IMR-90 (cell line): ENCODE measurements at regions of chr2 and their contacts with region 1.

Region 1: GRCh38 chr2:7927691-7928090 is 754.2 kb upstream of the ID2 start:
- DNase-seq: no peak
- ATAC-seq: no peak
- H3K4me3 ChIP-seq: no peak overlapping the region
- H3K27ac ChIP-seq: no peak overlapping the region
- H3K4me1 ChIP-seq: no peaks in the 10 kb centered on the region
- H3K27me3 ChIP-seq: no peaks in the 10 kb centered on the region
- CTCF ChIP-seq: no peak
- POLR2A ChIP-seq: no peak
- RAD21 ChIP-seq: no peak

Region 2: DNA sequence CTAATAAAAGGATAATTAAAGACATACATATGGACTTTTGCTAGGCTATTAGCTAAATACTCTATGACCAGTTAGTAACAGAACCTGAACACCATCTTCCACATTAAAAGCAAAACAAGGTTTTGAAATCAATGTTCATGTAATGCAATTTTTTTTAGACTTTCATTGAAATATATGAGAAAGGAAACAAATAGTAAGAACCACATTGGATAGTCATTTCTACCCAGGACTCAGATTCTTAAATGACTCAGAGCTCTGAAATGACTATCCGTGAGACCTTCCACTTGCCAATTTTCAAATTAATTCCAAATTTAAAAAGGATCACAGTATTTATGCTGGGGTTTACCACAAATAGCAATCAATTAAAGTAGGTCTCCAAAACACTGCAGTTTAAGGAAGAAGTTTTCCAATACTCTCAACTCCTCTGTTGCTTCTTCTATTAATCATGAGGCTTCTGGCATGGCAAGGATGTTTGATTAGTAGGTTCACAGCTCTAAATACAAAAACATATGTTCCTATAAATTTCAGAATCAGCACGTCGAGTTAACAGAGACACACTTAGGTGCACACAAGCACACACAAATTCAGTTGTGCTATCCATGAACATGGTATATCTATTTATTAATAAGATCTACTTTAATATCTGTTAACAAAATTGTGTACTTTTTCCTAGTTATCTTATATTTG is 169.5 kb before region 1 on chr2:
- CTCF ChIA-PET with region 1: no interaction called
- POLR2A ChIA-PET with region 1: no interaction called
- dilution Hi-C with region 1: no loop called
- in situ Hi-C with region 1: no loop called
- intact Hi-C with region 1: loop called (anchors 10 kb)
- DNase-seq: no peak
- ATAC-seq: no peak
- H3K4me3 ChIP-seq: no peak overlapping the region
- H3K27ac ChIP-seq: no peak overlapping the region
- H3K4me1 ChIP-seq: no peaks in the 10 kb centered on the region
- H3K27me3 ChIP-seq: no peaks in the 10 kb centered on the region
- CTCF ChIP-seq: no peak
- POLR2A ChIP-seq: no peak
- RAD21 ChIP-seq: no peak